Activated naive CD4-positive, alpha-beta T cell treated with anti-CD3 and anti-CD28 coated beads for 36 hours (primary cell): ENCODE measurements at regions of chr6 and their contacts with region 1.

Region 1: GRCh38 chr6:72825315-72825911 is 203.5 kb downstream of the KCNQ5 start:
- DNase-seq: no peak
- H3K4me3 Mint-ChIP-seq: no peak overlapping the region
- H3K27ac Mint-ChIP-seq: peak overlapping the region; percentile 13
- H3K4me1 Mint-ChIP-seq: peaks cover 39% of the 10 kb centered on the region
- H3K27me3 Mint-ChIP-seq: no peaks in the 10 kb centered on the region

Region 2: DNA sequence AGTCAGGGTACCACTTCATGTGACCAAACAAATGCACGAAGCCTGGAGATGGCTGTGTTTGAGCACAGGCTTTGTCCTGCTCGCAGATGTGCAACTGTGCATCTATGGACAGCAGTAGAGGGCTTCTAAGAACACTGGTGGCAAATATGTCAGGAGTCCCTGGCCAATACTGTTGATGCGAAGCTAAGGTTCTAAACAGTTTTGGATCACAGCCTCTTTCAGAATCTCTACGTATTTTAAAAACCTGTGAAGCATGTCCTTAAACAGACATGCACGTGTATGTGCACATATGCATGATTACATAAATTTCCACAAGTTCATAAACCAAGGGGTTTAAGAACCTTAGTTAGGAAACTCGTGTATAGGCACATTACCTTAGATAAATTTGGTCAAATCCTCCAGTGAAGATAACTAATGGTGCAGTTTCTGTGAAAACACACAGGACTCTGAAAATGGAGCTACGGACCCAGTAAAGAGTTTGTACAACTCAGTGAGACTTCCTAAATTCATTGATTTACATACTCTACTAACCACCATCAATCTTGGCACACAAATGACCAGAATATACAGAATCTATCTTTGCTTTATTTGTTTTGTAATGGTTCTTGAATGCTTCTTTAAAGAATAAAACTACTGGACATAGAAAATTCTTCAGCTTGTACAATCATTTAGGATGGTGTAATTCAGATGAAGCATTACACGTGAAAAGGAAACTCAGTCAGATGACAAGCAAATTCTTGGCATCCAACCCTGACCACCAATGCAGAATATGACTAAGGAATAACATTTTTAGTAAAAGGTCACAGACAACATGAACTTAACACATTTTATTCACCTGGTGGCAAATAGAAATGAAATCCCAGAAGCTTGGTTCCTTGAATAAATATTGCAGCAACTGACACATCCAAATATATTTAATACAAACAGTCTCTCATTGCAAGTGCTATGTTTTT is 176.1 kb before region 1 on chr6:
- CTCF ChIA-PET with region 1: no interaction called
- intact Hi-C with region 1: loop called (anchors 1 kb)
- DNase-seq: peak; percentile 57
- H3K4me3 Mint-ChIP-seq: no peak overlapping the region
- H3K27ac Mint-ChIP-seq: peak overlapping the region; percentile 60
- H3K4me1 Mint-ChIP-seq: peaks cover 57% of the 10 kb centered on the region
- H3K27me3 Mint-ChIP-seq: no peaks in the 10 kb centered on the region

Region 3: GRCh38 chr6:72787391-72788031 is 37.9 kb before region 1 on chr6:
- CTCF ChIA-PET with region 1: no interaction called
- intact Hi-C with region 1: loop called (anchors 5 kb)
- DNase-seq: no peak
- H3K4me3 Mint-ChIP-seq: no peak overlapping the region
- H3K27ac Mint-ChIP-seq: no peak overlapping the region
- H3K4me1 Mint-ChIP-seq: peaks cover 10% of the 10 kb centered on the region
- H3K27me3 Mint-ChIP-seq: no peaks in the 10 kb centered on the region

Region 4: DNA sequence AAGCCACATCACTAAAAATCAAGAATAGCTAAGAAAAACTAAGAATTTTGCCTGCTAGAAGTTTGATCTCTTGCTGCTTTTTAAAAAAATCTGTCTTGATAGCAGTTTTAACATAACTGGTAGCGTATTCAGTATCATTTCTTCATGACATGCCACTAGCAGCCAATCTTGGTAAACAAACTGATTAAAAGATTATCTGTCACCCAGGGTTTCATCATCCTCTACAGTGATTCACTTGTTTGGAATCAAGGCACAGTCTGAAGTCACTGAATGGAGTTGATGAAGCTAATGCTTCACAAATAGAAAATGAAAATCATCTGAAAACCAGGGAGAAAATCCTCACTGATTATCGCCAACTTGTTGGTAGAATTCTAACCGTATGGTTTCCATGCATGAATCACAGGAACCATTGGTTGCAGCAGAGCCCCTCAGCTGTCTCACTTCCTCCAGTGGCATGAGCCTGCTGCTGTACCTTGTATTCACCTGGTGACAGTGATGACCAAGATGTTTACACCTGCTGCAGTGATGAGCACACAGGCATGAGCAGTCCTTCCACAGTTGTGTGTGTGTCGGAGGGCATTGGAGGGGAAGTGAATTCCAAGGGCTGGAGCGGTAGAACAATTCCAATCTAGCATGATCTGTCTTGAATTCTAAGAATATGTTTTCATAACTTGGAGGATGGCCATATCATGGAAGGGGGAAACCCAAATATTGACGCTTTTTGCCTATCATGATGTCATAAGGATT is 124.9 kb after region 1 on chr6:
- CTCF ChIA-PET with region 1: no interaction called
- intact Hi-C with region 1: loop called (anchors 5 kb)
- DNase-seq: no peak
- H3K4me3 Mint-ChIP-seq: no peak overlapping the region
- H3K27ac Mint-ChIP-seq: no peak overlapping the region
- H3K4me1 Mint-ChIP-seq: peaks cover 30% of the 10 kb centered on the region
- H3K27me3 Mint-ChIP-seq: no peaks in the 10 kb centered on the region

Region 5: DNA sequence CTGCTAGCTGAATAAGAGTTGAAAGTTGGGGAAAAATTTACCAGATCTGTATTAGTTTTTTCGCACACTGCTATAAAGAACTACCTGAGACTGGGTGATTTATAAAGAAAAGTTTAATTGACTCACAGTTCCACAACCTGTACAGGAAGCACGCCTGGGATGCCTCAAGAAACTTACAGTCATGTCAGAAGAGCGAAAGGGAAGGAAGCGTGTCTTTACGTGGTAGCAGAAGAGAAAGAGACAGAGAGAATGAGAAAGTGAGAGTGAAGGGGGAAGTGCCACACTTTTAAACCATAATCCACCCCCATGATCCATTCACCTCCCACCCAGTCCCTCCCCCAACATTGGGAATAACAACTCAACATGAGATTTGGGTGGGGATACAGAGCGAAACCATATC is 320.3 kb after region 1 on chr6:
- CTCF ChIA-PET with region 1: no interaction called
- intact Hi-C with region 1: loop called (anchors 1 kb)
- DNase-seq: peak; percentile 48
- H3K4me3 Mint-ChIP-seq: no peak overlapping the region
- H3K27ac Mint-ChIP-seq: no peak overlapping the region
- H3K4me1 Mint-ChIP-seq: peaks cover 9% of the 10 kb centered on the region
- H3K27me3 Mint-ChIP-seq: no peaks in the 10 kb centered on the region

Region 6: DNA sequence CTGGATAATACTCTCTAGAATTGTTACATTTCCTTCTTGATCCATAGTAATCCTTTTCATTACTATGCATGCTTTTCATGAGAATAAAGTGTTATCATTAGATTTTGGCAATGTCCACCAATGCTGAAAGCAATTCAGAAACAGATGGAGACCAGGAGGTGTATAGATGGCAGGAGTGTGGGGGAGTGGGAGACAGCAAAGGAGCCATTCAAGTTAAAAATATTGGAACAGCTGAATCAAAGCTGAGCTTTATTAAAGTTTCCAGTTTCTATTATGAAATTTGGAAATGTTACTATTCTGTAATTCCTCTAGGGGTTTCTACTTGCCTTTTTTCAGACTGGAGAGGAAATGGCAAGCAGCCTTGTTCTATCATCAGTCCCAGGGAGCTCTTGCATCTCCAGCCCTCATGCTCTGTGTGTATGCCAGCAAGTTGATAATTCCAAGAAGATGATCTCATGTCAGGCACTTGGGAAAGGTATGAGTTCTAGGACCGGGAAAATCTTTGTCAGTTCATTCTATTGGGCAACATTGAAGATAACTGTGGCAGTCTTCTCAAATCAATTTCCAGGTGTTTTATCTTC is 1098.6 kb after region 1 on chr6:
- CTCF ChIA-PET with region 1: no interaction called
- intact Hi-C with region 1: no loop called
- DNase-seq: no peak
- H3K4me3 Mint-ChIP-seq: no peak overlapping the region
- H3K27ac Mint-ChIP-seq: no peak overlapping the region
- H3K4me1 Mint-ChIP-seq: no peaks in the 10 kb centered on the region
- H3K27me3 Mint-ChIP-seq: no peaks in the 10 kb centered on the region